Left lung (tissue), 14 donors: ENCODE measurements at regions of chr9 and their contacts with region 1.

Region 1: GRCh38 chr9:2837915-2838314 is 6.0 kb downstream of the PUM3 start:
- DNase-seq: peak in 1 of 4 donors; percentile 35
- ATAC-seq: peak; percentile 74
- H3K4me3 ChIP-seq: no peak overlapping the region
- H3K27ac ChIP-seq: peak overlapping the region; percentile 59 to 79
- H3K4me1 ChIP-seq: peaks cover 13 to 55% of the 10 kb centered on the region in 2 donors
- H3K27me3 ChIP-seq: no peaks in the 10 kb centered on the region
- CTCF ChIP-seq: peak in 1 of 2 donors; percentile 16

Region 2: GRCh38 chr9:2132484-2133082 is 705.3 kb before region 1 on chr9:
- intact Hi-C with region 1: loop called in 1 of 2 experiments (anchors 10 kb)
- DNase-seq: peak in 2 of 4 donors; percentile 30 to 53
- ATAC-seq: peak; percentile 65
- H3K4me3 ChIP-seq: no peak overlapping the region
- H3K27ac ChIP-seq: no peak overlapping the region
- H3K4me1 ChIP-seq: peaks cover 2 to 7% of the 10 kb centered on the region in 2 donors
- H3K27me3 ChIP-seq: no peaks in the 10 kb centered on the region
- CTCF ChIP-seq: peak in 1 of 2 donors; percentile 79